Esophagus muscularis mucosa (tissue), 4 donors: ENCODE measurements at regions of chr16 and their contacts with region 1.

Region 1: GRCh38 chr16:70594576-70594975 is 51.8 kb upstream of the IL34 start:
- DNase-seq: no peak
- H3K4me3 ChIP-seq: no peak overlapping the region
- H3K27ac ChIP-seq: no peak overlapping the region
- H3K4me1 ChIP-seq: peaks cover 26 to 41% (median 36%) of the 10 kb centered on the region in 4 donors
- H3K27me3 ChIP-seq: no peaks in the 10 kb centered on the region
- CTCF ChIP-seq: no peak
- EP300 ChIP-seq: no peak
- POLR2A ChIP-seq: no peak

Region 2: GRCh38 chr16:70438969-70439862 is 155.4 kb before region 1 on chr16 and contains the start of gene ST3GAL2:
- intact Hi-C with region 1: no loop called
- DNase-seq: peak; percentile 97
- H3K4me3 ChIP-seq: peak within 1 kb of the TSS; percentile 84 to 94 (median 86)
- H3K27ac ChIP-seq: peak within 1 kb of the TSS; percentile 81 to 87 (median 84)
- H3K4me1 ChIP-seq: peaks cover 32 to 43% (median 40%) of the 10 kb centered on the region in 4 donors
- H3K27me3 ChIP-seq: no peaks in the 10 kb centered on the region
- CTCF ChIP-seq: peak in 1 of 3 experiments; percentile 14
- EP300 ChIP-seq: no peak
- POLR2A ChIP-seq: no peak
- total RNA-seq, gene ST3GAL2: 18.6 to 34.9 (median 27.2) TPM

Region 3: DNA sequence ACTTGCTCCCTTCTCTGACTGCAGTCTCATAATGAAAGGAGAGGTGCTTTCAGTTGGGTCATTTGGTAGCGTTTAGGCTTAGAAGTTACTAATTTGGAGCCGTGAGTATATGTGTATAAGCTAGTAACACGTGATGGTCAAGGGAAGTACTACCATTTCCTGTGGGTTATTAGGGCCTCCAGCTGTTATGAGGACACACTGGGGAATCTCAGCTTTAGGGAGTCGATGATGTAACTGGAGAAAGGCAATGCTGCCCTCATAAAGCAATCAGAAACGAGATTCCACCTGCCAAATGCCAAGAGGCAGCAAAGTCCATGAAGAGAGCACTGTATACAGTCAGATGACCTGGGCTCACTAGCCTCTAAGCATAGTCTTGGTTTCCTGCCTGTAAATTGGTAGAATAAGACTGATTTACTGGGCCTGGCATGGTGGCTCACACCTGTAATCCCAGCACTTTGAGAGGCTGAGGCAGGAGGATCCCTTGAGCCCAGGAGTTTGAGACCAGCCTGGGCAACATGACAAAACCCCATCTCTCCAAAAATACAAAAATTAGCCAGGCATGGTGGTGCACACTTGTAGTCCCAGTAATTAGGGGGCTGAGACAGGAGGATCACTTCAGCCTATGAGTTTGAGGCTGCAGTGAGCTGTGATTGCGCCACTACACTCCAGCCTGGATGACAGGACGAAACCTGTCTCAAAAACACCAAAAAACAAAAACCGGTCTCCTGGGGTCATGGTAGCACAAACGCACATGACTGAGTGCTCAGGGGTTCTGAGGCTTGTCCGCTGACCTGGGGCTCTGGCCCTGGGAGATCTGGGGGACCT is 17.9 kb before region 1 on chr16:
- intact Hi-C with region 1: loop called (anchors 1 kb)
- DNase-seq: no peak
- H3K4me3 ChIP-seq: no peak overlapping the region
- H3K27ac ChIP-seq: peak overlapping the region; percentile 27 to 52 (median 34)
- H3K4me1 ChIP-seq: peaks cover 53 to 67% (median 62%) of the 10 kb centered on the region in 4 donors
- H3K27me3 ChIP-seq: no peaks in the 10 kb centered on the region
- CTCF ChIP-seq: no peak
- EP300 ChIP-seq: no peak
- POLR2A ChIP-seq: no peak